ENCODE measurements at regions of chr11 and their contacts with region 1.

Region 1: GRCh38 chr11:10304495-10305213 is at the start of gene ADM:
- DNase-seq: peak; percentile 82
- H3K4me3 ChIP-seq: peak within 1 kb of the TSS; percentile 84
- CTCF ChIP-seq: peak; percentile 49

Region 2: DNA sequence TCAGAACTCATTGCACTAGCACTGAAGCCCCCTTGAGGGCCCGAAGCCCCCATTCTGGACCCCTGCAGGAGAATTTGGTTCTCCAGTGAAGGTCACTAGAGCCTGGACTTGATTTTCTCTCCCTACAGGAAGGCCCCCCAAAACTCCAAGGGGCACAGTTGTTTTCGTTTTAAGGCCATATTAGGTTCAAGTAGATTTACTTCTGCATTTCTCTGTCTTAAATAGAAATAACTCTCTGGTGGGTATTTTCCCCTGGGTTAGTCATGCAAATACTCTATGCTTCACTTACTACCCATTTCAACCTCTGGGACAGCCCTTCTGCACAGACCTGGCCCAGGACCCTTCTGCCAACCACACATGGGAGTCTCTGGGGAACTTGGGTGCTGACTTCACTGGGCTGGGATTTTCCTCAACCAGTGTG is 689.6 kb before region 1 on chr11:
- in situ Hi-C with region 1: loop called (anchors 5 kb)
- DNase-seq: no peak
- H3K4me3 ChIP-seq: no peak overlapping the region
- CTCF ChIP-seq: no peak